MCF 10A (cell line): ENCODE measurements at regions of chr5 and their contacts with region 1.

Region 1: GRCh38 chr5:122736086-122736845 is 38.6 kb upstream of the SNX2 start:
- DNase-seq: no peak
- H3K4me3 Mint-ChIP-seq: no peak overlapping the region
- H3K27ac Mint-ChIP-seq: no peak overlapping the region
- H3K4me1 Mint-ChIP-seq: peaks cover 1% of the 10 kb centered on the region
- H3K27me3 Mint-ChIP-seq: no peaks in the 10 kb centered on the region
- CTCF ChIP-seq: no peak

Region 2: DNA sequence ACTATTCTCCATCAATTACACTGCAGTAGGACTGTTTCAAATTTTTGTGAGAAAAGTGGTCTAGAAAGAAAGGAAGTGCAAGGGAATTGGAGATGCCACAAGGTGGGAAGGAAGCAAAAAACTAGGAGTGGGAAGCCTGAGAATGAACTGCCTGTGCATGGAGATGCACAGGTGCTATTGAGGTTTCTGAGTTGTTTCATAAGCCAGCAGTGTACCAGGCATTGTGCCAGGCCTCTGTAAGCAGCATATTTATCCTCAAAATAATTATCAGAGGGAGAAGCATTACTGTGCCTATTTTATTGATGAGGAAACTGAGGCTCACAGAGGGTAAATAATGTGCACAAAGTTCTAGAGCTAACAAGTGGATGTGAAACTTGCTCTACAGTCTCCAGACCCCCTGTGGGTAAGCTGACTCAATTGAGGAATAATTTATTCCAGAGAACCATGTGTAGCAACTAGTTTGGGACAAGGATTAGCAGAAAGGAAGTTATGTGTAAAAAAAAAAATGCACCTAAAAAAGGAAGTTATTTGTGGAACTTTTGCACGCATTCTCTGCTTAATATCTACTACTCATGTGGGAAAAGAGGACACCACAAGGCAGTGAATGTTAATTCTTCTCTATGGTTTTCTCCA is 327.6 kb before region 1 on chr5:
- CTCF ChIA-PET with region 1: no interaction called
- POLR2A ChIA-PET with region 1: no interaction called
- intact Hi-C with region 1: no loop called
- DNase-seq: no peak
- H3K4me3 Mint-ChIP-seq: no peak overlapping the region
- H3K27ac Mint-ChIP-seq: no peak overlapping the region
- H3K4me1 Mint-ChIP-seq: peaks cover 13% of the 10 kb centered on the region
- H3K27me3 Mint-ChIP-seq: peaks cover 17% of the 10 kb centered on the region
- CTCF ChIP-seq: no peak

Region 3: GRCh38 chr5:122697191-122697590 is 39.1 kb before region 1 on chr5:
- CTCF ChIA-PET with region 1: no interaction called
- POLR2A ChIA-PET with region 1: no interaction called
- intact Hi-C with region 1: no loop called
- DNase-seq: no peak
- H3K4me3 Mint-ChIP-seq: no peak overlapping the region
- H3K27ac Mint-ChIP-seq: no peak overlapping the region
- H3K4me1 Mint-ChIP-seq: no peaks in the 10 kb centered on the region
- H3K27me3 Mint-ChIP-seq: no peaks in the 10 kb centered on the region
- CTCF ChIP-seq: no peak

Region 4: DNA sequence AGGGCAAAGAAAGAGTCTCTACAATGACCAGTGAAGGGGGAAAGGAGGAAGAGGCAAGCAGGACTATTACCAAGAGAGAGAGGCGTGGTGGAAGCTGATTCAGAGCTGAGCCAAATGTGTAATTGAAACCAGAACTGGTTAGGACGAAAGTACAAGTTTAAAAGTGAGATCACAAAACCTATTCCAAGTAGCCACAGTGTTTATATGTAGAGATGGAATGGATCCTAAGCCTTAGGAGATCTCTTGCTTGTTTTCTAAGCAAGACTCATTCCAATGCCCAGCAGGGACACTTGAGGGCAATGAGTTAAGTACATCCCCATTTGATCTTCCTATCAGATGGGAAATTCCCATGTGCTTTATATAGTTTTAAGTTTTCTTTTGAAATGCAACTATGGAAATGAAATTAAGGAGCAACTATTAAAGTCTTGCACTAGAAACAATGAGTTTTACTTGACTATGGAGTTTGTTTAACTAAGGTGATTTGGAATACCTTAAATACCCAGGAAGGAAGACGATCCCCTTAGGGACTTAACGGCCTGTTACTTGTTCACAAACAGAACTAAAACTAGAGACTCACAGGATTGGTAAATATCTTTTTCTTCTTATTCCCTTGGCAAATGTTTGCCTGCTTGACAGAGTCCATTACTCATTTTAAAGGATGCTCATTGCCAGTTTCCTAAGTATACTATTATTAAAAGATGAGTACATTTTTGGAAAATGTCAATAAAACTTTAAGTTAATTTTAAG is 12.5 kb before region 1 on chr5:
- CTCF ChIA-PET with region 1: interaction called, 4 read pairs
- POLR2A ChIA-PET with region 1: no interaction called
- intact Hi-C with region 1: loop called (anchors 1 kb)
- DNase-seq: peak; percentile 46
- H3K4me3 Mint-ChIP-seq: no peak overlapping the region
- H3K27ac Mint-ChIP-seq: peak overlapping the region; percentile 1
- H3K4me1 Mint-ChIP-seq: peaks cover 12% of the 10 kb centered on the region
- H3K27me3 Mint-ChIP-seq: no peaks in the 10 kb centered on the region
- CTCF ChIP-seq: no peak